ENCODE measurements at regions of chr10 and their contacts with region 1.

Region 1: DNA sequence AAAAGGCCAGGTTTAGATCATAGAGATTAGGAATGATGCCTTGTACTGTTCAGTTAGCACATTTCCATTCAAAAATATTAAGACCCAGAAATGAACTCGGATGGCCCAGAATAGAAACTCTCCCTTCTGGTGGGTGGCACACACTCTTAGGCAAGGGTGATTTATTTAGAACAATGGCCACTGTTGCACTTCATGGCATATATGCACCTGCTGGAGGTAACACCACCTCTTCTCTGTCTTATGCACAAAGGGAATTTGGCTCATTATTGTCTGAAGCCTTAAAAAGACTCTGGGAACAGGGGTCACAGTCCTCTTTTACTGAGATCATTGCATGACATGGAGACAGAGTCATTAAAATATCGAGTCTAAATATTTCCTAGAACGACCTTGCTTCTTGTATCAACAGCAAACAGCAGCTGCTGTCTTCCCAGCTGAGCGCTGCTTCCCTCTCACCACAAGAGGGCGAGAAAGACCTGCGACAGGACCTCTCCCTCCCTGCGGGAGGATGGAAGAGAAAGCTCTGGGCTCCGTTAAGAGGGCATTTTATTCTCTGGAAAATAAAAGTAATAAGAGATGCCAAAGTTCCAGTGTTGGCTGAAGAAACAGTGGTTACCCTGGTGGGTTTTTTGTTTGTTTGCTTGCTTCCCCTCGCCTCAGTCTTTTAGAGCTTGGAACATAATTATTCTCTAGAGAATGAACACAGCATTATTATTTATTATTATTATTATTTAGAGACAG is 13.6 kb upstream of the BAMBI start:
- DNase-seq: peak; percentile 80
- H3K4me3 Mint-ChIP-seq: no peak overlapping the region
- H3K27ac Mint-ChIP-seq: no peak overlapping the region
- H3K4me1 Mint-ChIP-seq: peaks cover 47% of the 10 kb centered on the region
- H3K27me3 Mint-ChIP-seq: peaks cover 10% of the 10 kb centered on the region
- CTCF ChIP-seq: peak; percentile 76

Region 2: DNA sequence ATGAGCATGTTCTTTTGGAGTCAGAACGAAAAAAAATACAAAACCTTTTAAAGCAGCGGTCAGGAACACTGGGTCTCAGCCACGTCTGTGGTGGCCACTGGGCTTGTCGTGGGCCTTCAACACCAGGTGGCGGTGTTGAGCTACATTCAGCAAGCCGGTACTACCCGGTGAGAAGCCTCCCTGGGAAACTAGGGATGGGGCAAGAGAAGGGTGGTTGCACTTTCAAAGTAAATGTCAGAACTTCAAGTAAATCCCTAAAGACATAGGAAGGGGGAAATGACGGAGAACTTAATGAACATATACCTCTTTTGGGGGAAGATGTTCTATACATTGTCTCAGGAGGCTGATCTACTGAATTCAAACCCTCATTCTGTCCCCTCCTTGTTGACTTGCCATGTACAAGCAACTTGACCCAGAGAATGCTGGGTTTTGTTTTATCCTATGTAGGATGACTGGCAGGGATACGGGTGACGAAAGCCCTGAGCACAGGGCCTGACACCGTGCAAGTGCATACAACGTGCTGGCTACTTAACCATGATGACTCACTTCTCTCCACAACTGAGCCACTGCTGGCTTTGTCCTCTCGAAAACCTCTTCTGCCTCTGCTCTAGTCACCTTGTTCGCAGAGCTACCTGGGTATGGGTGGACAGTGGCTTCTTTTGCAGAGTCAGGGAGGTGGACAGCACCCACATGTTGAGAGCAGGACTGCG is 35.4 kb before region 1 on chr10:
- CTCF ChIA-PET with region 1: interaction called, 9 read pairs
- intact Hi-C with region 1: loop called (anchors 2 kb)
- DNase-seq: peak; percentile 86
- H3K4me3 Mint-ChIP-seq: no peak overlapping the region
- H3K27ac Mint-ChIP-seq: no peak overlapping the region
- H3K4me1 Mint-ChIP-seq: peaks cover 21% of the 10 kb centered on the region
- H3K27me3 Mint-ChIP-seq: no peaks in the 10 kb centered on the region
- CTCF ChIP-seq: peak; percentile 89

Region 3: DNA sequence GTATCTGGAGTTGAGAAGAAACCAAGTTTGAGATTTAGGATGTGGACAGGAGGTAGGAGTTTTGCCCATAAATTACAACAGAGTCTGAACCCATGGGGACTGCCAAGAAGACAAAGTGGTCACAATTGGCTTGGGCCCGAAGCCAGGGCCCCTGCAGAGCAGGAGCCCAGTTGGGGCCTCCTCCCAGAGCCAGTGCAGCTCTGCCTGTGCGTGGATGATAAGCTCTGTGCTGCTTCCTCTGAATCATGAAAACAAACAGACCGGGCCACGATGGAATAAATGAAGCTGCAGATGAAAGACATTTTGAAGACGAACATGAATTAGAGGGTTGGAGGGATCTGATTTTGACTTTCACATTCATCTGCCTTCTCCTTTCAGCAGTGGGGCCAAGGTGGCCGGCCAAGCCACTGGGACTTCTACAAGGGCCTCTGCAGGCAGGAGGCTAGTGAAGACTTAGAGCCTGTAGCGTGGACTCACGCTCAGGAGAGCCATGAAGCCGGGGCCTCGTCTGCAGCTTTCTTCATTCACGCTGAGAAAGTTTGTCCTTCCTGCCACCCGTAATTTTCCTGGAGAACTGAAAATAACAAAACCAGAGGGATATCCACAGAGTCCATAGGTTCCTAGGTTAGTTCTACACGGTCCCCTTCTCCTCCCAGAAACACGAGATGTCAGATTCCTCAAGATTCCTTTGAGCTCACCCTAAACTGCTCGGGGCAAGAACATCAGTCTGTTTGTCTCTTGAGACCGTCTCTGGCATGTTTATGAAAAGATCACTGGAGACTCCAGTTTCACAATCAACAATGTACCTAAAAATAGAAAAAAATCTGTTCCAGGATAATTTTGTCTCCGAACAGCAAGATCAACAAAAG is 468.4 kb after region 1 on chr10:
- CTCF ChIA-PET with region 1: interaction called, 5 read pairs
- intact Hi-C with region 1: loop called (anchors 1 kb)
- DNase-seq: no peak
- H3K4me3 Mint-ChIP-seq: no peak overlapping the region
- H3K27ac Mint-ChIP-seq: no peak overlapping the region
- H3K4me1 Mint-ChIP-seq: peaks cover 9% of the 10 kb centered on the region
- H3K27me3 Mint-ChIP-seq: no peaks in the 10 kb centered on the region
- CTCF ChIP-seq: no peak

Measured in Calu3 (cell line).